Left cardiac atrium (tissue), 4 donors: ENCODE measurements at regions of chr19 and their contacts with region 1.

Region 1: GRCh38 chr19:3762501-3763459 is at the start of gene MRPL54:
- DNase-seq: peak; percentile 99
- ATAC-seq: peak; percentile 95 to 96
- total RNA-seq, gene MRPL54: 63.6 to 68.9 TPM

Region 2: DNA sequence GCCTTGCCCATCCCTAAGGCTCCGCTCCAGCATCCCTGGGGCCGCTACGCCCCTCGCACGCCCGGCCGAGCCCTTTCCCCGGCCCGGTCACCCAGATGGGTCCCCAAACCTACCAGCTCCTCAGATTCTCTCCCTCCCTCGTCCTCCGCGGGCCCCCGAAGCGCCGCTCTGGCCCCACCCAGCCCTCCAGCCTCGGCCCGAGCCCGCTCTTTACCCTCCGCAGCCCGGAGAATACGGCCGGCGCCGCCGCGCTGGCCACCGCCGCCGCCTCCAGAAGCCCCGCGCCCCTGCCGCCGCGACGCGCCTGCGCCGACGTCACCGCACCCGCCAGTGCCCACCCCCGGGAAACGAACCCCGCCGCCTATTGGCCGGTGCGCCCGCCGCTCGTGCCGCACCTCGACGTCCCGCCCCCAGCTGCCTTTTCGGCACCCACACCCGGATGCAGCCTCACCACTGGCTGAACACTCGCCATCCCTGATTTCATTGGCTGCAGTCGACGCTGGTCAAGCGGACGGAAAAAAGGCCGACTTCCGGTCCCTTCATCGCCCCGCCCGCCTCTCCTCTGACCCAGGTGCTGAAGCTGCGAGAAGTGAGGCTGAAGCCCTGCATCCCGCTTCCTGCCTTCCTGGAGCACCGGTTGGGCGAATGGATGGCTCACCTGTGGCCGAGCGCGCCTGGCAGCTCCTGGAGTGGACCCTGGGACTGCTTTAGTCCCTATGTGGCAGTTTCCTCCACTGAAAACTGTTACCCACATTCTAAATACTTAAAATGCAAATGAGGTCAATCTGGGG is 208.2 kb after region 1 on chr19 and contains the start of gene DAPK3:
- intact Hi-C with region 1: loop called in 1 of 2 experiments (anchors 10 kb)
- DNase-seq: peak; percentile 97
- ATAC-seq: peak; percentile 86 to 90
- total RNA-seq, gene DAPK3: 52.4 to 95.1 TPM